ENCODE measurements at regions of chr18 and their contacts with region 1.

Region 1: DNA sequence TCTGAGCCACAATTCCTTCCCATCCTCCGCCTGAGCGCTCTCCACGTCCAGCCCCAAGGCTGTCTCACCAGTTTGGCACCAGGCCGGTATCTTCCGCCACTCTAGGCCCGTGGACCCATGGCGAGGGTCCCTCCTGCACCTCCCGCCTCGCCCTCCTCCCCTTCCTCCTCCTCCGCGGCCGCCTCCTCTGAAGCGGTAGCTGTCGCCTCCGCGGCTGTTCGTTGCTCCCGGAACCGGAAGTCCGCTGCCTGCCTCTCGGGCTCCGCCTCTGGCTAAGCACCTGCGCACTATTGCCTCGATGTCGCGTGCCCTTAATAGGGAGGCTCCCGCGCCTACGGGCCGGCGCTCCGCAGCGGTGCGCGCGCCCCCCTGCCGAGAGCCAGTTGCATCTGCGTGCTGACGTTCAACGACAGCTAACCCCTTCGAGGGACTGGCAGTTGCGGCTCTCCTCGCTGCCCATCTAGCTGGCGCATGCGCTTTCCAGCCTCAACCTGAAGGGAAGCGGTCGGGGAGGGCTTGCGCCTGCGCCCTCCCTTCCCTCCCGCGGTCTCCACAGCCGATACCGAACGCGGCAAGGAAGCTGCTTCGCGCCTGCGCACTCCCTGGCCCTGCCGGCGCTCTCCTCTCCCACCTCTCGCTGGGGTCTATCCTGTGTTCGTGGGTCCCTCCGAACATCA is at the start of gene MBD1:
- DNase-seq: peak; percentile 96 to 97
- ATAC-seq: peak; percentile 96 to 97
- H3K4me3 ChIP-seq: peak within 1 kb of the TSS; percentile 74 to 99 (median 90)
- H3K27ac ChIP-seq: peak within 1 kb of the TSS; percentile 88 to 95 (median 92)
- H3K4me1 ChIP-seq: peaks cover 18 to 24% of the 10 kb centered on the region in 2 donors
- H3K27me3 ChIP-seq: no peaks in the 10 kb centered on the region
- CTCF ChIP-seq: peak in 3 of 5 experiments; percentile 31 to 50 (median 35)
- POLR2A ChIP-seq: peak; percentile 85 to 93
- total RNA-seq, gene MBD1: 80.4 to 127 (median 103) TPM

Region 2: GRCh38 chr18:49728542-49728941 is 552.9 kb before region 1 on chr18:
- in situ Hi-C with region 1: no loop called
- intact Hi-C with region 1: no loop called
- DNase-seq: no peak
- ATAC-seq: peak in 1 of 2 donors; percentile 24
- H3K4me3 ChIP-seq: no peak overlapping the region
- H3K27ac ChIP-seq: no peak overlapping the region
- H3K4me1 ChIP-seq: peaks cover 0 to 3% of the 10 kb centered on the region in 2 donors
- H3K27me3 ChIP-seq: no peaks in the 10 kb centered on the region
- CTCF ChIP-seq: peak in 4 of 5 experiments; percentile 17 to 54 (median 27)
- POLR2A ChIP-seq: no peak

Region 3: DNA sequence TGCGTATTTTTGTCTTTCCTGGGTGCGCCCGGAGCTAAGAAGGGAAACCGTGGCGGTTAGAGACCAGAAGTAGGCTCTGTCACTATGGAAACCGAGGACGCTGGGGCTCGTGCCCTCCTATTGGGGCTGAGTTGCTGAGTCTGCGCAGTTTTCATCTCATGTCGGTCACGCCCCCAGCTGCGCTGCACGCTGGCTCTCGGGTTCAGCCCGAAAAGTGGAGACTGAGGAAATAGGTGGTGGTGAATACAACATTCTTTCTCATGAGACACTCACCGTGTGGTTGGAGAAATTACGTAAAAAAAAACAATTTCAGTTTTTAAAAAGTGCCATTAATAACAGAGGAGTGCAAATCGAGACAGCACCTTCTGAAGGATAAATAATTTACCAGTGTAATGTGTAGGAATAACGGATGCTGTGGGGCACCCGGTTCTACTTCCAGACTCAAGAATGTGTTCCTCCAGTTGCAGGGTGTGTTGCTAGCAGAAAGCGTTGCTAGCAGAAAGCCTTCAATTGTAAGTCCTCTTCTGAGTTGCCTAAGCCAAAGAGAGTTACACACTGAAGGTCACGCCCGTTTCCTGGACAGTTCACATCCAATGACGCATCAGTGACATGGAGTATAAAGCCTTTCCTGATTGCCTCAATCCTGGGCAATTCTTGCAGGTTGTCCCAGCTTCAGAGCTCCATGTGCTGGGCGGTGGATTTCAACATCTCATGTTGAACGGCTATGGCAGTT is 26.5 kb after region 1 on chr18:
- in situ Hi-C with region 1: no loop called
- intact Hi-C with region 1: loop called (anchors 2 kb)
- DNase-seq: peak; percentile 70 to 82
- ATAC-seq: peak; percentile 97 to 99
- H3K4me3 ChIP-seq: peak overlapping the region; percentile 41 to 58 (median 53)
- H3K27ac ChIP-seq: peak overlapping the region in 2 of 4 donors; percentile 21 to 62
- H3K4me1 ChIP-seq: peaks cover 3 to 6% of the 10 kb centered on the region in 2 donors
- H3K27me3 ChIP-seq: peaks cover 0 to 23% (median 2%) of the 10 kb centered on the region in 3 donors
- CTCF ChIP-seq: no peak
- POLR2A ChIP-seq: no peak

Region 4: DNA sequence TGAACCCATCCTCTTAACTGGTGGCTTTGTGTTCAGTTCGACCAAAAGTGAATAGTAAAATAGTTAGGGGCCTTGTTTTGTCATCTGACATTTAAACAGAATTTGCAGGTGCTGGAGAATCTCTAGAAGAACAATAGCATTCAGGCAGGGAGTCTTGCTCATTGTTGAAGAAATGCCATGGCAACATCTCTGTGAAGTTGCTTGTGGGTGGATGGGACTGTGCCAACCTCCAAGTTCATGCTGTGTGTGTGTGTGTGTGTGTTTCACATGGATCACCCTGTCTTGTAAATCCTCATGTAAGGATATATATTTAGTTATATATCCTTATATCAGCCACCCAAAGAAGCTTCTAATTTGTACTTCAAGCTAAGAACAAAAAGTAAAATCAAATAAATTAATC is 160.1 kb after region 1 on chr18:
- in situ Hi-C with region 1: no loop called
- intact Hi-C with region 1: no loop called
- DNase-seq: no peak
- ATAC-seq: no peak
- H3K4me3 ChIP-seq: no peak overlapping the region
- H3K27ac ChIP-seq: no peak overlapping the region
- H3K4me1 ChIP-seq: no peaks in the 10 kb centered on the region
- H3K27me3 ChIP-seq: no peaks in the 10 kb centered on the region
- CTCF ChIP-seq: no peak
- POLR2A ChIP-seq: no peak

Measured in gastrocnemius medialis (tissue), 4 donors.